ENCODE measurements at regions of chr1 and their contacts with region 1.

Region 1: DNA sequence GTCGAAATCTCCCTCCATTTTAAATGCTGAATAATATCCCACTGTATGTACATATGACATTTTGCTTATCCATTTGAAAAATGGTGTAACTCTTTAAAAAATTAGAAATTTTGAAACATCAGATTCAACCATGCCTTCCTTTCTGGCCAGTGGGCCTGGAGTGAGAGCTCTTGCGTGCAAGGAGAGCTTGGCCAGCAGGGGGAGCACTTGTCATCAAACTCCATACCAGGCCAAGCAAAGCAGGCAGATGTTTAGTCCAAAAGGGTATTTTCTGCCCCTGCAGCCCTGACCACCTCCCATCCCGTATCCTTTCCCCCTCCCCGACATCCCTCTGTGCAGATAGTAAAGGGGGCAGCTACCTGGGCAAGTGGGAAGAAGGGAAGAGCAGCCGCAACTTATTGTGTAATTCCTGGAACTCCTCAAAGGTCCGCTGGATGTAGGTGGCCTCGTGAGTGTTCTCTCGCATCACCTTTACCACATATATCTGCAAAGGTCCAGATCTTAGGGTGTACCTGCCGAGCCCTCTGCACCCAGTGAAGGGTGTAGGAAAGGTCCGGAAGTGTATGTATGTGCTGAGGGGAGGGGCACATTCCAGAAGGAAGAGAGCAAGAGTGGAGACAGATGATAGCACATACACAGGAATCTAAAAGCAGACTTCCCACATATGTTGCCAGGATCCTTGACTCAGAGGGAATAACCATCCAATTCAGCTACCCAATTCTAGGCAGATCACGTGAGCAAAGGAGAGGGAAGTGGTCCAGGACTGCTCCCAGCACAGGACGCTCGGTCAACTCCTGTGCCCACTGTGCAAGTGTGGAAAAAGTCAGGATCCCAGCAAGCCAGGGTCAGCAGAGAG is 19.9 kb upstream of the PPP1R15B start:
- DNase-seq: peak; percentile 65
- H3K4me3 ChIP-seq: no peak overlapping the region
- H3K27ac ChIP-seq: peak overlapping the region; percentile 39
- H3K27me3 ChIP-seq: peaks cover 2% of the 10 kb centered on the region
- CTCF ChIP-seq: peak; percentile 92

Region 2: GRCh38 chr1:204241050-204241449 is 190.5 kb before region 1 on chr1:
- CTCF ChIA-PET with region 1: no interaction called
- POLR2A ChIA-PET with region 1: no interaction called
- DNase-seq: no peak
- H3K4me3 ChIP-seq: no peak overlapping the region
- H3K27ac ChIP-seq: peak overlapping the region; percentile 11
- H3K27me3 ChIP-seq: no peaks in the 10 kb centered on the region
- CTCF ChIP-seq: no peak

Region 3: GRCh38 chr1:204348722-204349121 is 82.8 kb before region 1 on chr1:
- CTCF ChIA-PET with region 1: no interaction called
- POLR2A ChIA-PET with region 1: no interaction called
- DNase-seq: no peak
- H3K4me3 ChIP-seq: 0 out of 2 replicates have a peak overlapping the region, but pooled peaks have one; percentile 1
- H3K27ac ChIP-seq: no peak overlapping the region
- H3K27me3 ChIP-seq: no peaks in the 10 kb centered on the region
- CTCF ChIP-seq: no peak

Region 4: GRCh38 chr1:204411451-204412204 is 19.9 kb before region 1 on chr1 and contains the start of gene PPP1R15B:
- CTCF ChIA-PET with region 1: interaction called, 18 read pairs
- POLR2A ChIA-PET with region 1: interaction called, 4 read pairs
- DNase-seq: peak; percentile 97
- H3K4me3 ChIP-seq: peak within 1 kb of the TSS; percentile 98
- H3K27ac ChIP-seq: peak within 1 kb of the TSS; percentile 98
- H3K27me3 ChIP-seq: no peaks in the 10 kb centered on the region
- CTCF ChIP-seq: no peak
- polyA plus RNA-seq, gene PPP1R15B: 25.4 and 28.4 TPM in 2 replicates

Region 5: DNA sequence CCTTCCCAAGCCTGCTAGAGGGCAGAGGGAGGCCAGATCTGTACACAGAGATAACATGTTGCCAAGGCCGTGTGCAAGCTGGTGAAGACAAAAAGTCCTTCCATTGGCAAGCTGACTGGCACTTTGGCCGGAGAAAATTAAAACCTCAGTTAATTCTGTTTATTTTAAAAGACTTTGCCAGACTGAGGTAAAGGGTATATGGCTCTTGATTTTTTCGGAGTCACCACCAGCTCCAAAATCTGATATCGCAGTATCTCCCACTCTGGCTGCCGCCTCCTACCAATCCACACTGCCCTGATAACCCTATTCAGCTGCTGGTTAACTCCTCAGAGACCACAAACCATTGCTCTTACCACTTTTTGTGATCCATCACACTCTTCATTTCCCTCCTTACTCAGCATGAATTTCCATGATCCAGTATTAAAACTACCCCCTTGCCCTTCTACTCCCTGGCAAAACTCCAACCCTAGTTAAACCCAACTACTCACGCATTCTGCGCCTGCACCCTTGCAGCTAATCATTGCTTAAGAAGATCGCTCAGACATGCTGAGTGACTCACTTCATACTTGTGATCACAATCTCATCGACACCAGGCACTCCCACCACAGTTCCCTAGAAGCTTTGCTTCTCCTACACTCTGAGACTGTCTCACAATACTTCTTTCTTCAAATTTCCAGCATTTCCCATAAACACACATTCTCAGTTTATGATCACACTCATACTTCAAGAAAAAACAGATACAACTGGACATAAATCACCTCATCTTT is 14.1 kb before region 1 on chr1:
- CTCF ChIA-PET with region 1: interaction called, 45 read pairs
- POLR2A ChIA-PET with region 1: interaction called, 4 read pairs
- DNase-seq: peak; percentile 86
- H3K4me3 ChIP-seq: peak overlapping the region; percentile 38
- H3K27ac ChIP-seq: peak overlapping the region; percentile 90
- H3K27me3 ChIP-seq: no peaks in the 10 kb centered on the region
- CTCF ChIP-seq: no peak

Region 6: DNA sequence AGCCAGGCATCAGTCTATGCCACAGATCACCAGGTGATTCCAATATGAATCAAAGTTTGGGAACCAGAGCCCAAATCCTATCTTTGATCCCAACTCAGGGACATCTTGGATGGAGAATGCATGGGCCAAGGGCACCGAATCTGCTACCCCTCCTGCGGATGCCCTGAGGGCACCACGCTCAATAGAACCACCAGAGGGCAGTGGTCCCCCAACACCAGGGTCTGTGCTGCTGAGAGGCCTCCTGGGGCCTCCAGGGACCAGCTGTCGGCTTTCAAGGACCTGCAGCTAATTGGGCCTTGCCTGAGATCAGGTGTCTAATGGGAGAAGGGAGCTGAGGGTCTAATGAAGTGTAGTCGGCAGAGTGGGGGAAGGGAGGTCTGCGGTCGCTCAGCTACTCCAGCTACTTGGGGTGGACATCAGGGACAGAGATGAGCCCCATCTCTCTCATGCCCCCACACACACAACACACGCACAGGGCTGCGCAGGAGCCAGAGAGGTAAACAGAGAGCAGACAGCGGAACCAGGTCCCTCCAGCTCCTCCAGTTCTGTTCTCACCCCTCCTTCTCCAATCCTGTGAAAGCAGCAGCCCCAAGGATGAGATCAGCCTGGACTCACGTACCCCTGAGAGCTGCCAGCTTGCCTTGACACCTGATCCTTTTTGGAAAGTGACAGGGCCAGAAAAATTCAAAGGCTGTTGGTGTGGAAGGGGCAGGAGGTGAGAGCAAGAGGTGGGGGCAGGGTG is 15.0 kb after region 1 on chr1:
- CTCF ChIA-PET with region 1: interaction called, 51 read pairs
- POLR2A ChIA-PET with region 1: no interaction called
- DNase-seq: no peak
- H3K4me3 ChIP-seq: no peak overlapping the region
- H3K27ac ChIP-seq: no peak overlapping the region
- H3K27me3 ChIP-seq: no peaks in the 10 kb centered on the region
- CTCF ChIP-seq: peak; percentile 81

Region 7: DNA sequence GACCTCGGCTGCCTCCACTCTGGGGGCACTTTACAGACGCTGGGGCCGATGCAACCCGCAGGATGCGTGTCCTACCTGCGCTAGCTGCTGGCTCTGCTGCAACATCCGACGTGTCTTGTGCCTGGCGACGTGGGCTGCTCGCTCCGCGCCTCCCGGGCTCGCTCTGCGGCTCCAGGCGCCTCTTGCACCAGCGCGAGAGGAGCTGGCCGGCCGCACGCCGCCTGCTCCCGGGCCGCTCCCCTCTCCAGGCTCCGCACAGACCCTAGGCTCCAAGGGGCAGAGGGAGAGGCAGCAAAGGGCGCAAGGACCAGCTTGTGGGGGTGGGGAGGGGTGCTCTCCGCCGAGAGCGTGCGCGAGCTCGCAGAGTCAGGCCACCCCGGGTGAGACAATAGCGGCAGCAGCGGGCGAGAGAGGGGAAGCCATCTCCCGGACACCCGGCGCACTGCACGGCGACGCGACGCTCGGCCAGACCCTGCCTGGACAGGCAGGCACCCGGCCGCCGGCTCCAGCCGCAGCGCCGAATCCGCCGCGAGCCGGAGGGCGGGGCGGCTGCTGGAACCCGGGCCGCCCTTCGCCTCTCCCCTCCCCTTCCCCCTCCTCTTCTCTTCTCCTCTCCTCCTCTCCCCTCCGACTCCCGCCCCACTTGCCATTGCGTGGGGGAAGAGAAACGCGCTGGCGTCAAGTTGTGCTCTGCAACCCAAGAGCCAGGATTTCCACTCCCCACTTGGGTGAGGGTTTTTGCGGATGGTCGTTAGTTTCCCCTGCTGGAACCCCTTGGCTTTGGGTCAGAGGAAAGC is 62.9 kb after region 1 on chr1 and contains the start of gene PIK3C2B:
- CTCF ChIA-PET with region 1: interaction called, 29 read pairs
- POLR2A ChIA-PET with region 1: interaction called, 4 read pairs
- DNase-seq: peak; percentile 33
- H3K4me3 ChIP-seq: peak within 1 kb of the TSS; percentile 87
- H3K27ac ChIP-seq: peak within 1 kb of the TSS; percentile 70
- H3K27me3 ChIP-seq: peaks cover 8% of the 10 kb centered on the region
- CTCF ChIP-seq: peak; percentile 34; the same call in 1 of the 2 replicates
- polyA plus RNA-seq, gene PIK3C2B: 4.9 and 6.3 TPM in 2 replicates

Region 8: DNA sequence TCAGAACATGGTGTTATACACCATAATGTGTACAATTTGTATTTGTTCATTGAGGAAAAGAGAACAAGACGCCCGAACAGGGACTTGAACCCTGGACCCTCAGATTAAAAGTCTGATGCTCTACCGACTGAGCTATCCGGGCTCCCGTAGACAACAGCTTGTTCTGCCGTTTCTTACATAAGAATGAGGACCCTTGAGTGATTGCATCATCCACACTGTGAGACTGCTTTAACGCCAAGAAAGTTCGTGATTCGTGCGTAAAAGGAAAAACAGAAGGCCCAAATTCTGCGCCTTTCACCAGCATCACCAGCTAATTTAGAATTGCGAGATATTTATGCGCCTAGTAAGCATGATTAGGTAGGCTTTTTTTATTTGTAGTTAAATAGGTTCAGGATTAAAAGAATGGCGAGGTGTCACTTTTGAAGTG is 75.4 kb after region 1 on chr1:
- CTCF ChIA-PET with region 1: interaction called, 175 read pairs
- POLR2A ChIA-PET with region 1: no interaction called
- DNase-seq: peak; percentile 88
- H3K4me3 ChIP-seq: peak overlapping the region; percentile 52
- H3K27ac ChIP-seq: peak overlapping the region; percentile 85
- H3K27me3 ChIP-seq: no peaks in the 10 kb centered on the region
- CTCF ChIP-seq: no peak

Region 9: GRCh38 chr1:204578867-204579664 is 147.5 kb after region 1 on chr1:
- CTCF ChIA-PET with region 1: no interaction called
- POLR2A ChIA-PET with region 1: no interaction called
- DNase-seq: no peak
- H3K4me3 ChIP-seq: no peak overlapping the region
- H3K27ac ChIP-seq: no peak overlapping the region
- H3K27me3 ChIP-seq: peaks cover 8% of the 10 kb centered on the region
- CTCF ChIP-seq: no peak

Region 10: DNA sequence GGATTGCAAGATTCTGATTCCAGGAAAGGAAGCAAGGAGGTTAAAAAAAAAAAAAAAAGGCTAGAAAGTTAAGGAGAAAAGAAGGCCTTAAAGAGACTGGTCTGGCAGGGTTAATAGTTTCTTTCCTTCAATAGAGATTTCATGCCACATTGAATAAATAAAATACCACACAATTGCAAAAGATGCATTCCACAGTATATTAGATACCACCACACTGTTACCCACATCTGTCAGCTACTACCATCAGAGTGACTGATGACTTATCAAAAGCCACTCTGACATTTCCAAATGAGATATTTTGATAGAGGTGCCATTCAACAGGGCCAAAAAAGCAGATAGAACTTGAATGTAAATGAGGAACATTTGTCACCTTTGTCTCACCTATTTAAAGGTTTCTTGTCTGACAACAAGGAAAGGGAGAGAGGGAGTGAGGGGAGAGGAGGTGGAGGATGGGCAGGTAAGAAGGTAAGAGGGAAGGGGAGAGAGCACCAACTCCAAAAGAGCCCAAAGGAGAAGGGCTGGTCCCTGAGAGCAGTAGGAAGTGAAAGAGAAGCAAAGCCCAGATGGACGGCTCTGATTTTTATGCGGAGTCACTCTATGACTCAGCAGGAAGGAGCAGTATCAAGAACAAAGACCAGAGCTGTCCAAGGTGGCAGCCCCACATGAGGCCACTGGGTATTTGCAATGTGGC is 215.7 kb after region 1 on chr1:
- CTCF ChIA-PET with region 1: no interaction called
- POLR2A ChIA-PET with region 1: no interaction called
- DNase-seq: peak; percentile 26
- H3K4me3 ChIP-seq: no peak overlapping the region
- H3K27ac ChIP-seq: no peak overlapping the region
- H3K27me3 ChIP-seq: peaks cover 24% of the 10 kb centered on the region
- CTCF ChIP-seq: no peak

Measured in AG04450 (cell line).